Lower lobe of right lung (tissue), 2 donors: ENCODE measurements at regions of chr5 and their contacts with region 1.

Region 1: GRCh38 chr5:39566891-39567290 is 142.1 kb upstream of the DAB2 start:
- DNase-seq: no peak
- ATAC-seq: no peak
- H3K4me3 ChIP-seq: no peak overlapping the region
- H3K27ac ChIP-seq: no peak overlapping the region
- H3K4me1 ChIP-seq: no peaks in the 10 kb centered on the region
- H3K27me3 ChIP-seq: no peaks in the 10 kb centered on the region
- CTCF ChIP-seq: no peak

Region 2: GRCh38 chr5:39224196-39224761 is 342.6 kb before region 1 on chr5:
- intact Hi-C with region 1: loop called (anchors 10 kb)
- DNase-seq: peak; percentile 55
- ATAC-seq: peak; percentile 50 to 73
- H3K4me3 ChIP-seq: no peak overlapping the region
- H3K27ac ChIP-seq: no peak overlapping the region
- H3K4me1 ChIP-seq: peaks cover 2% of the 10 kb centered on the region
- H3K27me3 ChIP-seq: no peaks in the 10 kb centered on the region
- CTCF ChIP-seq: no peak

Region 3: GRCh38 chr5:39691993-39692392 is 125.1 kb after region 1 on chr5:
- intact Hi-C with region 1: no loop called
- DNase-seq: no peak
- ATAC-seq: no peak
- H3K4me3 ChIP-seq: no peak overlapping the region
- H3K27ac ChIP-seq: no peak overlapping the region
- H3K4me1 ChIP-seq: no peaks in the 10 kb centered on the region
- H3K27me3 ChIP-seq: no peaks in the 10 kb centered on the region
- CTCF ChIP-seq: no peak